AG04450 (cell line): ENCODE measurements at regions of chr6 and their contacts with region 1.

Region 1: GRCh38 chr6:149028767-149029405 is 282.1 kb downstream of the UST start:
- DNase-seq: peak; percentile 87
- H3K4me3 ChIP-seq: no peak overlapping the region
- H3K27ac ChIP-seq: no peak overlapping the region
- H3K27me3 ChIP-seq: no peaks in the 10 kb centered on the region
- CTCF ChIP-seq: peak; percentile 60

Region 2: GRCh38 chr6:148559848-148560433 is 468.9 kb before region 1 on chr6:
- CTCF ChIA-PET with region 1: interaction called, 14 read pairs
- POLR2A ChIA-PET with region 1: no interaction called
- DNase-seq: peak; percentile 50
- H3K4me3 ChIP-seq: peak overlapping the region; percentile 58
- H3K27ac ChIP-seq: no peak overlapping the region
- H3K27me3 ChIP-seq: no peaks in the 10 kb centered on the region
- CTCF ChIP-seq: peak; percentile 92

Region 3: GRCh38 chr6:148811459-148811858 is 217.4 kb before region 1 on chr6:
- CTCF ChIA-PET with region 1: no interaction called
- POLR2A ChIA-PET with region 1: no interaction called
- DNase-seq: no peak
- H3K4me3 ChIP-seq: no peak overlapping the region
- H3K27ac ChIP-seq: no peak overlapping the region
- H3K27me3 ChIP-seq: no peaks in the 10 kb centered on the region
- CTCF ChIP-seq: no peak

Region 4: DNA sequence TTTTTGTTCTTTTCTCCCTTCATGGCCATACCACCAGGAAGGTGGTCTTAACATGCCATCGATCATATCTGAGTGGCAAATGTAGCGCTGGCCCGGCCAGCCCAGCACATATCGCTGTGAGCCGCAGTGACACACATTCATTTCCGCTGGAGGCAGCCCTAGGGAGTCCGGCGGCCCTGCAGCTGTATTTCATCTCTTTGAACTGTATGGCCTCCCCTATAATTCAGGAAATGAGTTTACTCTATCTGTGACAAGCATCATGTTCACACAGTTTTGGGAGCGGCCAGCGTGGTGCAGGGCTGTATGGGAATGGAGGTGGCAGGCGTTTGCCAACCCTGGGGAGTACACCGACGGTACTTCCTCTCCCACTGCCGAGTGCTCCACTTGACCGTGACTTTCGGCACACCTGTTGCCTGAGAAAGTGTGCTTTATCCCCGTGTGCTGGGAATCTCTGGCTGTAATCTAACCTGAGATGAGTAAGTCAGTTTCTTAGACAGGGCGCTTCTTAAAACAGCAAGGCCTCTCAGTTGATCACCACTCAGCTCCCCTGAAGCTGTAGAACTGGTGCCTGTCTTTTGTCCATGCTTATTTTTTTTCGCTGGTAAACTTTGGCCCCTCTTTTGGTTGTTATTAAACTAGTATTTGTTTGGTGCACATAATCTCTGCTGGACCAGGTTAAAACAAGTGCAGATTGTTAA is 31.6 kb after region 1 on chr6:
- CTCF ChIA-PET with region 1: interaction called, 9 read pairs
- POLR2A ChIA-PET with region 1: interaction called, 11 read pairs
- DNase-seq: no peak
- H3K4me3 ChIP-seq: no peak overlapping the region
- H3K27ac ChIP-seq: peak overlapping the region; percentile 63
- H3K27me3 ChIP-seq: no peaks in the 10 kb centered on the region
- CTCF ChIP-seq: no peak

Region 5: GRCh38 chr6:149077208-149077607 is 48.3 kb after region 1 on chr6:
- CTCF ChIA-PET with region 1: interaction called, 7 read pairs
- POLR2A ChIA-PET with region 1: interaction called, 12 read pairs
- DNase-seq: no peak
- H3K4me3 ChIP-seq: no peak overlapping the region
- H3K27ac ChIP-seq: no peak overlapping the region
- H3K27me3 ChIP-seq: no peaks in the 10 kb centered on the region
- CTCF ChIP-seq: no peak

Region 6: DNA sequence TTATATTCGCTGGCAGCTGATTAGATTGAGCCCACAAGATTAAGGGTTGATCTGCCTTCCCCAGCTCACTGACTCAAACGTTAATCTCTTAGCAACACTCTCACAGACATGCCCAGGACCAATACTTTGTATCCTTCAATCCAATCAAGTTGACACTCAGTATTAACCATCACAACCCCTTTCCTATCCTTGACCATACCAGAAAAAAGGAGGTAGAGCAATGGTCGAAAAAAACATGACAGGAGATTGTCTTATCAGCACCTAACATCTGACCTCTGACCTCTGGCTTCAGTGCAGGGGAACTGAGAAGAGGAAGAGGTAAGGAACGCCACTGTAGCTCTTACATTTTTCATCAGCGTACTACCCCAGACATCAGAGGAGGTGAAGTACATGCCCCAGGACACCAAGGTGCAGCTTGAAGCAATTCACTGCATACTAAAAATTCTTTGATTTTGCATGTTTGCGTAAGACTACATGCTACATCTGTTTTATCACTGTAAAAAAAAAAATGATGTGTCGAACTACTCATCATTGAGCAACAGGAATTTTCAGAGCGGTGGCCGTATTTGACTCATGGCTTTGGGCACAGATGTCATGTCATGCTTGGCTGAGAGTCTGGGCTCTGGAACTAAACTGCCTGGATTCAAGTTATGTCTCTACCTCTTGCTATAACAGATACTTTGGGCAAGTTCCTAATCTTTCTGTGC is 100.6 kb after region 1 on chr6:
- CTCF ChIA-PET with region 1: no interaction called
- POLR2A ChIA-PET with region 1: no interaction called
- DNase-seq: peak; percentile 7
- H3K4me3 ChIP-seq: no peak overlapping the region
- H3K27ac ChIP-seq: no peak overlapping the region
- H3K27me3 ChIP-seq: no peaks in the 10 kb centered on the region
- CTCF ChIP-seq: no peak

Region 7: DNA sequence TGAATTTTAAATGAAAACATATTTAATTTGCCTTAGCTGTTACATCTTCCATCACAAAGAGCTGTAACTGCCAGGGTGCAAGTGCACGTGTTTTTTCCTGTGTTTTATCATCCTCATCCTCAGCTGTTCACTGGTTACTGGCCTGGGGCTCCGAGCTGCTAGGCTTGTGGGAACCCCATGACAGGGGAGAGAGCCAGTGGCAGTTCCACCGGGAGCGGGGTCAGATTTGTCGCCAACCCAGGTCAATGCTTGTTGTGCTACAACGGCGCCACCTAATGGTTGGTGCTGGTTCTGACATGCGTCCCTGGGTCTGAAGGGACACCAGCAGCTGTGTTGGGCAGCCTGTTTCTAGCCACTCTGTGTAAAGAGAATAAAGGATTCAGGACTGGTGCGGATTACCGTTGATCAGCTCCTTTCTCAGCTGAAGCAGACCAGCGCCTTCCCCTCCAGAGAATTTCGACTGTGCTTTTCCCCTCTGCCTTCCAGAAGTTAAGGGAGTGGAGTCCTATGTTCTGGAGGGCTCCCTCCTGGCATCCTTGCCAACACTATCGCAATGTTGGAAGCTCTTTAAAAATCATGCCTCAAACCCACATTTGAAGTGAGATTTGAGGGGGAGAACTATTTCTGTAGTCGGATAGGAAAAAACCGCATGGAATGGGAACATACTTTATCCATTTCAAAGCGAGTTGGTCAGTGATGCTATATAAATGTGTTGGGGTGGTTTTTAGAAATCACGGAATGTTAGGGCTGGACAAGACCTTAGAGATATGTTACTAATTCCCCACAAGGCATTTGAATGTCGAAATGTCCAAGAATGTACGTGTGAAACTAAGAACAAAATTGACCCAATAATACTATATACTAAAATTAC is 403.3 kb after region 1 on chr6:
- CTCF ChIA-PET with region 1: interaction called, 132 read pairs
- POLR2A ChIA-PET with region 1: interaction called, 5 read pairs
- DNase-seq: peak; percentile 53
- H3K4me3 ChIP-seq: peak overlapping the region; percentile 7; the same call in 1 of the 2 replicates
- H3K27ac ChIP-seq: no peak overlapping the region
- H3K27me3 ChIP-seq: no peaks in the 10 kb centered on the region
- CTCF ChIP-seq: peak; percentile 96